CD4-positive, alpha-beta memory T cell (primary cell): ENCODE measurements at regions of chr22 and their contacts with region 1.

Region 1: GRCh38 chr22:46748908-46749675 is 11.0 kb upstream of the CERK start:
- DNase-seq: peak; percentile 68 to 82 (median 71)
- H3K4me3 ChIP-seq: peak overlapping the region; percentile 23 to 39
- H3K4me3 Mint-ChIP-seq: peak overlapping the region; percentile 75 to 89 (median 82)
- H3K27ac ChIP-seq: peak overlapping the region; percentile 56
- H3K27ac Mint-ChIP-seq: peak overlapping the region; percentile 96 to 99 (median 96)
- H3K4me1 ChIP-seq: peaks cover 37% of the 10 kb centered on the region
- H3K4me1 Mint-ChIP-seq: peaks cover 17 to 26% (median 23%) of the 10 kb centered on the region in 4 donors
- H3K27me3 ChIP-seq: no peaks in the 10 kb centered on the region
- H3K27me3 Mint-ChIP-seq: no peaks in the 10 kb centered on the region

Region 2: GRCh38 chr22:46774253-46774979 is 25.3 kb after region 1 on chr22:
- CTCF ChIA-PET with region 1: no interaction called
- POLR2A ChIA-PET with region 1: interaction called, 11 read pairs
- intact Hi-C with region 1: no loop called
- DNase-seq: peak in 3 of 5 donors; percentile 34 to 50 (median 34)
- H3K4me3 ChIP-seq: peak overlapping the region in 1 of 2 donors; percentile 32
- H3K4me3 Mint-ChIP-seq: peak overlapping the region; percentile 62 to 87 (median 76)
- H3K27ac ChIP-seq: peak overlapping the region; percentile 73
- H3K27ac Mint-ChIP-seq: peak overlapping the region; percentile 91 to 98 (median 93)
- H3K4me1 ChIP-seq: peaks cover 80% of the 10 kb centered on the region
- H3K4me1 Mint-ChIP-seq: peaks cover 57 to 83% (median 74%) of the 10 kb centered on the region in 4 donors
- H3K27me3 ChIP-seq: no peaks in the 10 kb centered on the region
- H3K27me3 Mint-ChIP-seq: no peaks in the 10 kb centered on the region

Region 3: DNA sequence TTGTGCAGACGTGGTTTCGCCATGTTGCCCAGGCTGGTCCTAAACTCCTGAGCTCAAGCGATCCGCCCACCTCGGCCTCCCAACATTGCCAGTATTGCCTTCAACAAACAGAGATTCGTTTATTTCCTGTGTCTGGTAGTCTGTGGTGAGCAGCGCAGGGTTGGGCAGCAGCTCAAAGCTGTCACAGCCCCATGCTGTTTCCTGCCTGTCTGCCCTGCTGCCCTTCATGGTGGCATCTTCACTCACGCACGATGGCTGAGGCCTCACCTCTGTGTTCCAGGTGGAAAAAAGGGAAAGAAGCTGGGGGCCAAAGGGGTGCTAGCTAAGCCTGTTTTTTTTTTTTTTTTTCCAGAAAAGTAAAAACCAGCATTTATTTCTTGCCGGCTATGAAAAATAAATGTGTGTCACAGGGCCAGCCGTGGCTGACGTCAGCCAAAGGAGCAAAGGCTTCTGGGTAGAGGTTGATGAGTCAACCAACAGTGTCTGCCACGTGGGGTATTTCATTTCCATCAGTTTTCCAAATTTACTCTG is 42.2 kb after region 1 on chr22:
- CTCF ChIA-PET with region 1: interaction called, 3 read pairs
- POLR2A ChIA-PET with region 1: interaction called, 12 read pairs
- intact Hi-C with region 1: no loop called
- DNase-seq: peak; percentile 83 to 96 (median 87)
- H3K4me3 ChIP-seq: peak overlapping the region in 1 of 2 donors; percentile 45
- H3K4me3 Mint-ChIP-seq: peak overlapping the region; percentile 80 to 91 (median 86)
- H3K27ac ChIP-seq: peak overlapping the region; percentile 87
- H3K27ac Mint-ChIP-seq: peak overlapping the region; percentile 99 to 100 (median 100)
- H3K4me1 ChIP-seq: peaks cover 56% of the 10 kb centered on the region
- H3K4me1 Mint-ChIP-seq: peaks cover 33 to 61% (median 43%) of the 10 kb centered on the region in 4 donors
- H3K27me3 ChIP-seq: no peaks in the 10 kb centered on the region
- H3K27me3 Mint-ChIP-seq: no peaks in the 10 kb centered on the region